Tibial artery (tissue), 4 donors: ENCODE measurements at regions of chr16 and their contacts with region 1.

Region 1: DNA sequence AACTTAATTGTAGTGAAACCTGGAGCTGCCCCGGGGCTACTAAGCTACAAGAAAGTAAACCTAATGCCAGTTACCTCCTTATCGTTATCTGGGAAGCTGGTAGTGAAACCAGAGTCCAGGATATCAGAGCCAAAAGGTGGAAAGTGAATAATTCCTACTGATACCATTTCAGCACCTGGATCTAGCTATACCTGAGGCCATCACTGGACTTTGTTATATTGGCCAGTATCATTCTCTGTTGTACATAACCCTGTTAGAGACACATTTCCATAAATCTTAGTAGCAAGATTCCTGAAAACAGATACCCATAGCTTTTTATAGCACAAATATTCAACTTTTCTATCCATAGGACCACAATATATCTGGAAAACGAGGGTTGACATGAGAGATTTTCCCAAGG is 538.0 kb downstream of the GRIN2A start:
- DNase-seq: no peak
- H3K4me3 ChIP-seq: no peak overlapping the region
- H3K27ac ChIP-seq: no peak overlapping the region
- H3K4me1 ChIP-seq: no peaks in the 10 kb centered on the region
- H3K27me3 ChIP-seq: peaks cover 0 to 10% of the 10 kb centered on the region in 2 donors
- CTCF ChIP-seq: no peak

Region 2: GRCh38 chr16:9695163-9695562 is 50.9 kb after region 1 on chr16:
- intact Hi-C with region 1: loop called (anchors 5 kb)
- DNase-seq: no peak
- H3K4me3 ChIP-seq: no peak overlapping the region
- H3K27ac ChIP-seq: no peak overlapping the region
- H3K4me1 ChIP-seq: no peaks in the 10 kb centered on the region
- H3K27me3 ChIP-seq: peaks cover 0 to 6% of the 10 kb centered on the region in 2 donors
- CTCF ChIP-seq: no peak